H1 (cell line): ENCODE measurements at regions of chr10 and their contacts with region 1.

Region 1: GRCh38 chr10:128859738-128860386 is 607.2 kb upstream of the MGMT start:
- DNase-seq: peak in 1 of 2 experiments; percentile 67
- H3K4me3 ChIP-seq: no peak overlapping the region
- H3K27ac ChIP-seq: no peak overlapping the region
- H3K4me1 ChIP-seq: no peaks in the 10 kb centered on the region; a peak in 2 of 7 replicates
- H3K27me3 ChIP-seq: no peaks in the 10 kb centered on the region
- CTCF ChIP-seq: peak in 2 of 3 experiments; percentile 42 to 60; a peak in 2 of 4 replicates
- EP300 ChIP-seq: no peak
- POLR2A ChIP-seq: no peak
- RAD21 ChIP-seq: peak; percentile 61 to 68

Region 2: GRCh38 chr10:128763588-128763987 is 96.3 kb before region 1 on chr10:
- CTCF ChIA-PET with region 1: no interaction called
- POLR2A ChIA-PET with region 1: no interaction called
- DNase-seq: no peak
- H3K4me3 ChIP-seq: no peak overlapping the region
- H3K27ac ChIP-seq: no peak overlapping the region
- H3K4me1 ChIP-seq: peaks cover 0 to 3% (median under 1%) of the 10 kb centered on the region in 4 experiments; a peak in 1 of 7 replicates
- H3K27me3 ChIP-seq: no peaks in the 10 kb centered on the region
- CTCF ChIP-seq: no peak
- EP300 ChIP-seq: no peak
- POLR2A ChIP-seq: no peak
- RAD21 ChIP-seq: no peak

Region 3: DNA sequence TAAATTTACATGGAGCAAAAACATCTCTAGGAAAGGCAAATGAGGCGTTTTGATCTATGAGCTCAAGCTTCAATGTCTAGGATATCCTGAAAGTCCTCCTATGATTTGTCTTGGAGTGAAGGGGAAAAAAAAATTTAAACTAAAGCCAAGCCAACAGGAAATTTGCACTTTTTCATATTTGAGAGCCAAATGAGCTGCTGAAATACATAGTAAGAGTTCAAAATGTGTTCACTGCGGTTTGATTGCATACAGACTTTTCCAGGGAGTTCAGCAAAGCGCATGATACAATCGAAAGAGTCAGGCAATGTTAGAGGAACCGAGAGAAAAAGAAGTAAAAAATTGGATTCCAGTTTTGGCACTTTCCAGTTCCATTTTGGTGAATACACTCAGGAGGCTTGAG is 26.2 kb before region 1 on chr10:
- CTCF ChIA-PET with region 1: interaction called, 14 read pairs
- POLR2A ChIA-PET with region 1: no interaction called
- DNase-seq: no peak
- H3K4me3 ChIP-seq: no peak overlapping the region
- H3K27ac ChIP-seq: no peak overlapping the region
- H3K4me1 ChIP-seq: no peaks in the 10 kb centered on the region
- H3K27me3 ChIP-seq: no peaks in the 10 kb centered on the region
- CTCF ChIP-seq: no peak
- EP300 ChIP-seq: no peak
- POLR2A ChIP-seq: no peak
- RAD21 ChIP-seq: no peak

Region 4: GRCh38 chr10:128875956-128876736 is 16.3 kb after region 1 on chr10:
- CTCF ChIA-PET with region 1: interaction called, 17 read pairs
- POLR2A ChIA-PET with region 1: no interaction called
- DNase-seq: no peak
- H3K4me3 ChIP-seq: no peak overlapping the region
- H3K27ac ChIP-seq: no peak overlapping the region
- H3K4me1 ChIP-seq: no peaks in the 10 kb centered on the region
- H3K27me3 ChIP-seq: no peaks in the 10 kb centered on the region
- CTCF ChIP-seq: no peak
- EP300 ChIP-seq: no peak
- POLR2A ChIP-seq: no peak
- RAD21 ChIP-seq: no peak

Region 5: GRCh38 chr10:128916383-128916782 is 56.5 kb after region 1 on chr10:
- CTCF ChIA-PET with region 1: no interaction called
- POLR2A ChIA-PET with region 1: no interaction called
- DNase-seq: no peak
- H3K4me3 ChIP-seq: no peak overlapping the region
- H3K27ac ChIP-seq: no peak overlapping the region
- H3K4me1 ChIP-seq: no peaks in the 10 kb centered on the region
- H3K27me3 ChIP-seq: no peaks in the 10 kb centered on the region
- CTCF ChIP-seq: no peak
- EP300 ChIP-seq: no peak
- POLR2A ChIP-seq: no peak
- RAD21 ChIP-seq: no peak

Region 6: GRCh38 chr10:129004398-129004797 is 144.5 kb after region 1 on chr10:
- CTCF ChIA-PET with region 1: no interaction called
- POLR2A ChIA-PET with region 1: no interaction called
- DNase-seq: no peak
- H3K4me3 ChIP-seq: no peak overlapping the region
- H3K27ac ChIP-seq: no peak overlapping the region
- H3K4me1 ChIP-seq: no peaks in the 10 kb centered on the region
- H3K27me3 ChIP-seq: no peaks in the 10 kb centered on the region
- CTCF ChIP-seq: no peak
- EP300 ChIP-seq: no peak
- POLR2A ChIP-seq: no peak
- RAD21 ChIP-seq: no peak